Activated naive CD4-positive, alpha-beta T cell treated with anti-CD3 and anti-CD28 coated beads, Interleukin-2, amount 10 ng/mL, durations not matched to agents 7 days and 5 days (primary cell): ENCODE measurements at regions of chr15 and their contacts with region 1.

Region 1: GRCh38 chr15:51380999-51381795 is 39.7 kb downstream of the GLDN start:
- DNase-seq: peak; percentile 38
- H3K4me3 Mint-ChIP-seq: no peak overlapping the region
- H3K27ac Mint-ChIP-seq: no peak overlapping the region
- H3K4me1 Mint-ChIP-seq: no peaks in the 10 kb centered on the region
- H3K27me3 Mint-ChIP-seq: peaks cover 15% of the 10 kb centered on the region

Region 2: GRCh38 chr15:51368751-51369450 is 12.3 kb before region 1 on chr15:
- CTCF ChIA-PET with region 1: interaction called, 19 read pairs
- DNase-seq: no peak
- H3K4me3 Mint-ChIP-seq: no peak overlapping the region
- H3K27ac Mint-ChIP-seq: no peak overlapping the region
- H3K4me1 Mint-ChIP-seq: no peaks in the 10 kb centered on the region
- H3K27me3 Mint-ChIP-seq: peaks cover 4% of the 10 kb centered on the region

Region 3: GRCh38 chr15:51443282-51443914 is 62.2 kb after region 1 on chr15:
- CTCF ChIA-PET with region 1: no interaction called
- DNase-seq: no peak
- H3K4me3 Mint-ChIP-seq: no peak overlapping the region
- H3K27ac Mint-ChIP-seq: no peak overlapping the region
- H3K4me1 Mint-ChIP-seq: no peaks in the 10 kb centered on the region
- H3K27me3 Mint-ChIP-seq: peaks cover 5% of the 10 kb centered on the region